Activated T-helper 1 cell treated with anti-CD3 and anti-CD28 coated beads, Interleukin-12 subunit alpha, Interleukin-12 subunit beta, Interleukin-2, Interleukin-4 antibody, amounts not matched to agents 30 ng/mL and 10 ng/mL and 1 ng/mL, durations not matched to agents 14 hours and 24 hours and 36 hours (primary cell): ENCODE measurements at regions of chr7 and their contacts with region 1.

Region 1: GRCh38 chr7:88219781-88220747 is at the start of gene SRI:
- DNase-seq: peak; percentile 87
- H3K4me3 Mint-ChIP-seq: peak within 1 kb of the TSS; percentile 93
- H3K27ac Mint-ChIP-seq: peak within 1 kb of the TSS; percentile 95
- H3K4me1 Mint-ChIP-seq: peaks cover 43% of the 10 kb centered on the region
- H3K27me3 Mint-ChIP-seq: peaks cover 5% of the 10 kb centered on the region
- total RNA-seq, gene SRI: 173 and 185 TPM in 2 replicates

Region 2: GRCh38 chr7:87219545-87220025 is 1000.5 kb before region 1 on chr7 and contains the start of gene TMEM243:
- intact Hi-C with region 1: loop called (anchors 10 kb)
- DNase-seq: peak; percentile 79
- H3K4me3 Mint-ChIP-seq: peak within 1 kb of the TSS; percentile 100
- H3K27ac Mint-ChIP-seq: peak within 1 kb of the TSS; percentile 96
- H3K4me1 Mint-ChIP-seq: peaks cover 45% of the 10 kb centered on the region
- H3K27me3 Mint-ChIP-seq: peaks cover 11% of the 10 kb centered on the region
- total RNA-seq, gene TMEM243: 49.2 and 50.5 TPM in 2 replicates

Region 3: GRCh38 chr7:87628780-87629569 is 591.1 kb before region 1 on chr7:
- intact Hi-C with region 1: loop called (anchors 2 kb)
- DNase-seq: no peak
- H3K4me3 Mint-ChIP-seq: peak overlapping the region; percentile 72
- H3K27ac Mint-ChIP-seq: no peak overlapping the region
- H3K4me1 Mint-ChIP-seq: peaks cover 6% of the 10 kb centered on the region
- H3K27me3 Mint-ChIP-seq: peaks cover 29% of the 10 kb centered on the region

Region 4: GRCh38 chr7:87885018-87885505 is 335.0 kb before region 1 on chr7:
- intact Hi-C with region 1: no loop called
- DNase-seq: no peak
- H3K4me3 Mint-ChIP-seq: no peak overlapping the region
- H3K27ac Mint-ChIP-seq: no peak overlapping the region
- H3K4me1 Mint-ChIP-seq: peaks cover 37% of the 10 kb centered on the region
- H3K27me3 Mint-ChIP-seq: no peaks in the 10 kb centered on the region

Region 5: DNA sequence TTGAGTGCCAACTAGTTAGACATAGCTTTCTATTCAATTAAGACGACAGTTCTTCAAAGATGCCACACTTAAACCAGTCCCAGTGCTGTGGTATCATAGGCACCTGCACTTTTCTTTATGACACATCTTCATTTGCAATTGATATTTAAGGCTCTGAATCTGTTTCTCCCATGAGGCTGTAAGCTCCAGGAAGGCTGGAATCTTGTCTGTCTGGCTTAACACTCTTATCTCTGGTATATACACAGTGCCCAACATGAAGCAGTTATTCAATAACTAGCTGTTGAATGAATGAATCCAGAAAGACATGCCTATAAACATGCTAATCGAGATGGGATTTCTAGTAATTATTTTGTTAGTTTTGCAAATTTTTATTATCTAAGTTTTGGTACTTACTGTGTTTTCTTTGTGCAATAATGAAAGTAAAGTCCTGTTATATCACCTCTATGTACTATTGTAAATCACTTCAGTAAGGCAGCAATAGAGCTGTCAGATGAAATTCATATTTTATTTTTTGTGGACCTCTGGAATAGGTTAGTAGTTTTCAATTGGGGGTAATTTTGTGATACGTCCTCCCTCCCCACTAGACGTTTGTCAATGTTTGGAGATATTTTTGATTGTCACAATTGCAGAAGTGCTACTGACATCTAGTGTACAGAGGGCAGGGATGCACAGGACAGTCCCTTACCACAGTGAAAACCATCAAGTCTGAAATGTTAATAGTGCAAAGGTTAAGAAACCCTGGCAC is 137.9 kb after region 1 on chr7:
- intact Hi-C with region 1: loop called (anchors 1 kb)
- DNase-seq: no peak
- H3K4me3 Mint-ChIP-seq: no peak overlapping the region
- H3K27ac Mint-ChIP-seq: no peak overlapping the region
- H3K4me1 Mint-ChIP-seq: no peaks in the 10 kb centered on the region
- H3K27me3 Mint-ChIP-seq: no peaks in the 10 kb centered on the region

Region 6: GRCh38 chr7:89607792-89608191 is 1387.7 kb after region 1 on chr7:
- intact Hi-C with region 1: loop called (anchors 5 kb)
- DNase-seq: peak; percentile 35
- H3K4me3 Mint-ChIP-seq: peak overlapping the region; percentile 70
- H3K27ac Mint-ChIP-seq: peak overlapping the region; percentile 98
- H3K4me1 Mint-ChIP-seq: peaks cover 47% of the 10 kb centered on the region
- H3K27me3 Mint-ChIP-seq: peaks cover 3% of the 10 kb centered on the region